ENCODE measurements at regions of chr1 and their contacts with region 1.

Region 1: DNA sequence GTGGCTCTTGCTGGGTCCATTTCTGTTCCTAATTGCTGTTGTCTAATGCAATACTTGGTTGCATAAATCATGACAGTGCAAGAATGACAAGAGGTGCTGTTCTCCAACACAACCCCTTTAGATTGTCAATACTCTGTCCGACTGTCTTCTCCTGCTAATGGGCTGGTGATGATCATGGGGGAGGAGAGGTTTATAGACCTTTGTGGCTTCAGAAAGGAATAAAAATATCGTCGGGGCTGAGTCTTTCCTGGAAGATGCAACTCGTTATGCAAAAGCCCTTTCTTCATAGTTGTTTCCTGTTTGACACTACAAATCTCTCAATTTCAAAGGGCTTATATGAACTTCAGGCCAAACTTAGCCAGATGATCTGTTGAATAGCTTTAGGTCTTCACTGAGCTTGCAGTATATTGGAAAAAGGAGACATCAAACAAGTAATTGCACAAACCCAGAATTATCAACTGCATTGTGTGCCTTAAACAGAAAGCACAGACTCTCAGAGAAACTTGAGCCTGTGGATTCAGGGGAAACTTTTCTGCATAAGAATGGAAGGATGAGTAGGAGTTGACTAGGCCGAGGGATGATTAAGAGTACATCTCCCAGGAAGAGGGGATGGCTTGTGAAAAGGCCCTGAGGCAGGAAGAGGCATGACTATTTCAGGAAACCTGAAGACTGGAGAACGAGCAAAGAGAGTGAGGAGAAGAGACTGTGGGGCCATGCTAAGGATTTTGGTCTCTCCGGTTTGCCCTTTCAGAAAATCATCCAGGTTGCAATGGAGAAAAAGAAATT is 107.6 kb downstream of the TSEN15 start:
- DNase-seq: peak; percentile 82
- H3K4me3 ChIP-seq: no peak overlapping the region
- H3K27ac ChIP-seq: peak overlapping the region; percentile 17
- H3K4me1 ChIP-seq: peaks cover 26% of the 10 kb centered on the region
- H3K27me3 ChIP-seq: no peaks in the 10 kb centered on the region
- CTCF ChIP-seq: no peak

Region 2: DNA sequence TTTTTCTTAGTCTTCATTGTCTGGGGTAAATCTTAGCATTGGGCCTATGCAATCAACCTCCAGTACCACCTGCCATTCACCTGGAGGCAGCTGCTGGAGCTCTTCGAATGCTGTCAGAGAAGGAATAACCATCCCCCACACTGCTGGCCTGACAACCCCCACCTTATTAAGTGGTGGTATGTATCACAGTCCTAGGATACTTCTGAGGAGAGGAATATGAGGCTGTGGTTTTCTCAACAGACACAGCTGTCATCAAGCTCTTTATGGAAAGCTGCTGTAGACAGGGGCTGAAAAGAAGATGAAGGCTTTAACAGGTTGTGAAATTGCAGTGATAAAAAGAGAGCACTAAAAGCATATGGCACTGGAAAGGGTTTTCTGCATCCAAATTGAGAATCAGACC is 45.8 kb before region 1 on chr1:
- CTCF ChIA-PET with region 1: no interaction called
- dilution Hi-C with region 1: no loop called
- in situ Hi-C with region 1: no loop called
- intact Hi-C with region 1: loop called (anchors 2 kb)
- DNase-seq: no peak
- H3K4me3 ChIP-seq: no peak overlapping the region
- H3K27ac ChIP-seq: no peak overlapping the region
- H3K4me1 ChIP-seq: peaks cover 10% of the 10 kb centered on the region
- H3K27me3 ChIP-seq: no peaks in the 10 kb centered on the region
- CTCF ChIP-seq: no peak

Measured in mammary epithelial cell (primary cell).